Activated CD4-positive, alpha-beta T cell treated with anti-CD3 and anti-CD28 coated beads for 36 hours (primary cell): ENCODE measurements at regions of chr3 and their contacts with region 1.

Region 1: GRCh38 chr3:49120438-49121131 is at the start of gene USP19:
- DNase-seq: peak; percentile 97
- ATAC-seq: peak; percentile 97
- H3K4me3 Mint-ChIP-seq: peak within 1 kb of the TSS; percentile 87
- H3K27ac Mint-ChIP-seq: peak within 1 kb of the TSS; percentile 88
- H3K4me1 Mint-ChIP-seq: peaks cover 19% of the 10 kb centered on the region
- H3K27me3 Mint-ChIP-seq: no peaks in the 10 kb centered on the region
- total RNA-seq, gene USP19: 45.2 to 45.9 TPM

Region 2: GRCh38 chr3:48301020-48301796 is 819.4 kb before region 1 on chr3:
- CTCF ChIA-PET with region 1: no interaction called
- POLR2A ChIA-PET with region 1: no interaction called
- intact Hi-C with region 1: loop called in 1 of 2 experiments (anchors 5 kb)
- DNase-seq: peak; percentile 97
- ATAC-seq: peak; percentile 85
- H3K4me3 Mint-ChIP-seq: peak within 1 kb of the TSS; percentile 92
- H3K27ac Mint-ChIP-seq: peak within 1 kb of the TSS; percentile 98
- H3K4me1 Mint-ChIP-seq: peaks cover 27% of the 10 kb centered on the region
- H3K27me3 Mint-ChIP-seq: no peaks in the 10 kb centered on the region

Region 3: GRCh38 chr3:49028673-49029562 is 91.7 kb before region 1 on chr3 and contains the start of gene IMPDH2:
- CTCF ChIA-PET with region 1: no interaction called
- POLR2A ChIA-PET with region 1: no interaction called
- intact Hi-C with region 1: loop called in 1 of 2 experiments (anchors 2 kb)
- DNase-seq: peak; percentile 96
- ATAC-seq: peak; percentile 93
- H3K4me3 Mint-ChIP-seq: peak within 1 kb of the TSS; percentile 89
- H3K27ac Mint-ChIP-seq: peak within 1 kb of the TSS; percentile 97
- H3K4me1 Mint-ChIP-seq: peaks cover 53% of the 10 kb centered on the region
- H3K27me3 Mint-ChIP-seq: no peaks in the 10 kb centered on the region
- total RNA-seq, gene IMPDH2: 504 to 515 TPM

Region 4: GRCh38 chr3:49165771-49166751 is 45.5 kb after region 1 on chr3 and contains the start of gene CCDC71:
- CTCF ChIA-PET with region 1: interaction called, 5 read pairs
- POLR2A ChIA-PET with region 1: no interaction called
- intact Hi-C with region 1: loop called in 1 of 2 experiments (anchors 1 kb)
- DNase-seq: peak; percentile 88
- ATAC-seq: peak; percentile 81
- H3K4me3 Mint-ChIP-seq: peak within 1 kb of the TSS; percentile 90
- H3K27ac Mint-ChIP-seq: peak within 1 kb of the TSS; percentile 89
- H3K4me1 Mint-ChIP-seq: peaks cover 39% of the 10 kb centered on the region
- H3K27me3 Mint-ChIP-seq: no peaks in the 10 kb centered on the region
- total RNA-seq, gene CCDC71: 19.5 to 22.2 TPM

Region 5: DNA sequence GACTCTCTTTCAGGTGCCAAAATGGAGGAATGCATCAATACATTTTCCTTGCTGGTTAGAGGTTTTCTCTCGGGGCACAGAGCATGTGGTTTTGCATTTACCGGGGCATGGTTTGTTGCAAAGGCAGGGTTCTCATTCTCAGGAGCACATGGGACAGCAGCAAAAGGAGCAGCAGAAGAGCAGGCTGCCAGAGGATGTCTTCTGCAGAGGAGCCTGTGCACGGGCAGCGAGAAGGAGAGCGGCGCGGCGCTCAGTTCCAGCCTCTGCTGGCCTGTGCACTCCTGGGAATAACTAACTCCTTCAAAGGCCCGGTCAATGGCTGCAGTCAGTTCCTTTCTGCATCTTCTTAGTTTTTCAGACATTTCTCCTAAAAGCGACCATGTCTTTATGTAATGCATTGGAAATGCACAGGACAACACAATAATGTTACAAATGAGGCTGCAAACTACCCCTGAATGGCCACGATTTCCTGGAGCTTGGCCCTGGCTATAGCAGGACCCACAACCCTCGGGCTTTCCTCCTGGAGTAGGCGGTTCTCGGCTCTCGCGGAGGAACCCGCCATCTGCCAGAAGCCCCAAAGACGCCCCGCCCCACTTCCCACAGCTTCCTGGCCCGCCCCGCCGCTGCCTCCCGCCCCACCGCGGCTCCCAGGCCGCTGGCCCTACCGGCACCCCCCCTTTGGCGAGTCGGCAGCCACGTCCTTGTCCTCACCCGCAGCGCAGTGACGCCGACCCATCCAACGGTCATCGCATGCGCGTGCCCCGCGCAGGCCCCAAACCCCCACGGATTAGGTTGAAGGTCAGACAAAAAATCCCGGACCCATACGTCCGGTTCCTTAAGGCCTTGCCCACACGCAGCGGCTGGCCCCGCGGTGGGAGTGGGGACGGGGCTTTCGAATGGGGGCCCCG is 156.1 kb after region 1 on chr3 and contains the start of gene C3orf62:
- CTCF ChIA-PET with region 1: no interaction called
- POLR2A ChIA-PET with region 1: no interaction called
- intact Hi-C with region 1: loop called in 1 of 2 experiments (anchors 1 kb)
- DNase-seq: peak; percentile 88
- ATAC-seq: peak; percentile 87
- H3K4me3 Mint-ChIP-seq: peak within 1 kb of the TSS; percentile 77
- H3K27ac Mint-ChIP-seq: peak within 1 kb of the TSS; percentile 87
- H3K4me1 Mint-ChIP-seq: peaks cover 30% of the 10 kb centered on the region
- H3K27me3 Mint-ChIP-seq: no peaks in the 10 kb centered on the region
- total RNA-seq, gene C3orf62: 3.7 to 3.9 TPM